GM13977 (cell line): ENCODE measurements at regions of chr9 and their contacts with region 1.

Region 1: DNA sequence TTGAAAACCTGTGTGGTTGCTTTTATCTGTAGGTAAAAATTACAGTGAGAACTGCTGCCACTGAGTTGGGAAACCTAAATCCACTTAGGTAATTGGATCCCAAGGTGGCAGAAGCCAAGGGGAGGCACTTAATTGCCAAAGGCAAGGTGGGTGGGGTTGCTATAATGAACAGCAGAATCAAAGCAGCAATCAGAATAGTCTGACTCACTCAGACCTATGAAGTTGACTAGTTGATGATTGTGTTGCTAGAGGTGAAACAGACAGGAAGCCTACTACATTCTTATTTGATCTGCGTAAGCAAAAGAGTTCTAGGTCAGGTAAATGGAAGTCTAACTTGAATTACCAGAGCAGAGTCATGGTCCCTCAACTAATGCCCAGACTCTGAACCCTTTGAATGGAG is 17.3 kb upstream of the BICD2 start:
- DNase-seq: no peak
- CTCF ChIP-seq: no peak

Region 2: DNA sequence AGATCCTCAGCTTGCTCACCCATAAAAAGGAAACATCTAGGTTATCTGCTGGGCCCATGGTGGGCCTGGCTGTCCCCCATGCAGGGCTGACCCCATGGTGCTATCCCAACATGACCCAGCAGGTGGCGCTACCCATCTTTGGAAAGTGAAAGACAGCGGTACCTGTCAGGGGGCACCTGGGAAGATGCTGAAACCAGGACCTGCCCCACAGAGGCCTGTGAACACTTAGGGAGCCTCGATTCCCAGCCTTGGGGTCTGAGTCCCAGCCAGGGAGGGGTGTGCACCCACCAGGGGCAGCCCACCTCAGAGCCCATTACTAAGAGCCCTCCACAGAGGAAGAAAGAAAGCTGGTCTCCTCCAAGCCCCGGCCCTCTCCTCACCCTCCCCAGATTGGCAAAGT is 65.4 kb before region 1 on chr9:
- in situ Hi-C with region 1: loop called (anchors 5 kb)
- DNase-seq: peak; percentile 88
- CTCF ChIP-seq: peak; percentile 93

Region 3: DNA sequence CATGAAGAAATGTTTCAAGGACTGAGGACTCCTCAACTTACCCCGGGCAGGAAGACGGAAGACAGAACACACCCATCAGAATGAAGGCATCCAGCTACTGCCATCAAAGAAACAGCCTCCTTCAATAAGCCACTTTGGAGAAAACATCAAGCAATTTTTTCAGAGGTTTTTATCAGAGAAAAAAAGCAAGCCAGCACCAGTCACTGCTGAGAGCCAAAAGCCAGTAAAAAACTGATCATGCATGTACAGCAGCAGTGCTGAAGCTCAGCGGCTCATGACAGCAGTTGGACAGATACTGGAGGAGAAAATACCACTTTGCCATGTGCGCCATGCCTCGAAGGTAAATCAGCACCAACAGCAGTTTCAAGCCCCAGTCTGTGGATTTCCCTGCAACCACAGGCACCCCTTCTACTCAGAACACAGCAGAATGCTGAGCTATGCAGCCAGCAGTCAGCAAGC is 106.0 kb after region 1 on chr9:
- in situ Hi-C with region 1: no loop called
- DNase-seq: no peak
- CTCF ChIP-seq: no peak